Activated T-helper 1 cell treated with anti-CD3 and anti-CD28 coated beads, Interleukin-12 subunit alpha, Interleukin-12 subunit beta, Interleukin-2, Interleukin-4 antibody, amounts not matched to agents 30 ng/mL and 10 ng/mL and 1 ng/mL, durations not matched to agents 14 hours and 24 hours and 36 hours (primary cell): ENCODE measurements at regions of chr1 and their contacts with region 1.

Region 1: DNA sequence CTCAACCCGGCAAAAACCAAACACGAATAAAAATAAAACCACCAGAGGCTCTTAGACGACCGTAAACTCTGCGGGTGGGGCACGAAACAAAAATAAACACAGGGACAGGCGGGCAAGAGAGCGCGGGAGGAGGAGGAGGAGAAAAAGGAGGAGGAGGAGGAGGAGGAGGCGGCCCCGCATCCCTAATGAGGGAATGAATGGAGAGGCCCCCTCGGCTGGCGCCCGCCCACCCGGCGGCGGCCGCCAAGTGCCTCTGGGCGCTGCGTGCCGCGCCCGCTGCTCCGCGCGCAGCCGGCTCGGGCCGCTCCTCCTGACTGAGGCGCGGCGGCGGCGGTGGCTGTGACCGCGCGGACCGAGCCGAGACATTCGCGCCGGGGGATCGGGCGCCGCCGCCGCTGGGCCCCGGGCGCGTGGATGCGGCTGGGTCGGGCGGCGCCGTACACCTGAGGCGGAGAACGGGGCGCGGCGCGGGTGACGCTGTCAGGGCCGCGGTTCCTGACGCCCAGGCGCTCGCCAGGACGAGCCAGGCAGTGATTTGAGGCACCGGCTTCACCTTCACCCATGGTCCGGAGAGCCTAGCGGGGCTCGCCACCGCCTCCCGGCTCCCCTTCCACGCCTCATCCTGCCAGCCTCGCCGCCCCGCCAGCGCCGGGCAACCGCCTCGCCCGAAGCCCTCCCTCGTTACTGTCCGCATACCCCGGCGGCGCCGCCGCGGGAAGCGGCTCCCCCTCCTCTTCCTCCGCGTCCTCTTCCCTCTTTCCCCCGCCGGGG is at the start of gene MARK1:
- DNase-seq: no peak
- H3K4me3 Mint-ChIP-seq: peak within 1 kb of the TSS; percentile 81
- H3K27ac Mint-ChIP-seq: peak within 1 kb of the TSS; percentile 32
- H3K4me1 Mint-ChIP-seq: peaks cover 12% of the 10 kb centered on the region
- H3K27me3 Mint-ChIP-seq: peaks cover 58% of the 10 kb centered on the region
- total RNA-seq, gene MARK1: not detected in 2 replicates

Region 2: GRCh38 chr1:219049501-219049900 is 1478.6 kb before region 1 on chr1:
- intact Hi-C with region 1: no loop called
- DNase-seq: no peak
- H3K4me3 Mint-ChIP-seq: no peak overlapping the region
- H3K27ac Mint-ChIP-seq: no peak overlapping the region
- H3K4me1 Mint-ChIP-seq: no peaks in the 10 kb centered on the region
- H3K27me3 Mint-ChIP-seq: no peaks in the 10 kb centered on the region

Region 3: GRCh38 chr1:220690140-220691025 is 162.3 kb after region 1 on chr1 and contains the start of gene C1orf115:
- intact Hi-C with region 1: loop called (anchors 5 kb)
- DNase-seq: peak; percentile 63
- H3K4me3 Mint-ChIP-seq: peak within 1 kb of the TSS; percentile 84
- H3K27ac Mint-ChIP-seq: no peak within 1 kb of the TSS
- H3K4me1 Mint-ChIP-seq: peaks cover 7% of the 10 kb centered on the region
- H3K27me3 Mint-ChIP-seq: peaks cover 26% of the 10 kb centered on the region
- total RNA-seq, gene C1orf115: 0.05 TPM in 1 of 2 replicates, not detected in the other